PC-9 (cell line): ENCODE measurements at regions of chr6 and their contacts with region 1.

Region 1: DNA sequence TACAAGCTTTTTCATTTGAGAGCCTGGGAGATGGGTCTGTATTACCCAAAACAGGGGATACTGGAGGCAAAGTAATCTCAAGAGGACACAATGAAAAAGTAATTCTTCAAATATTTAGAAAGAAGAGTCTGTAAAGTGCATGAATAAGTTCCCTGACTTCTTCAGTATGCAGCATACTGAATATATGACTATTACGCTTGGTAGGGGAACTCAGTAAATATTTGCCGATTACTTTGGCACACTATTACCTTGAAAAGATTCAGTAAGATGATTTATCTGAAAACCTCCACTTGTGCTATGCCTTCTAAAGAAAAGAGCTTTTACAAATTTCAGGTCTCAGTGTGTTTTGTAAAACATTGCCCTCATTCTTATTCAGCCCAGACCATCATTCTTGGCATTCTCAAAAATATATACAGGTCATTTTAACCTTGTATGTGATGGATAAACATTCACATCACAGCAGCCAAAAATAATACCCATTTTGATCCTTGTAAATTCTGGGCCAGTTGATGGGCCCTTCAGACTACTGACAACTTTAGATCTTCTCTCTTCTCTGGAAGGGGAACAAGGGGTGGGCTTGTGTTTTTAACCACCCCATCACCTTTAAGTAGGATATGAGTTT is 125.9 kb downstream of the EDN1 start:
- DNase-seq: no peak
- H3K4me3 ChIP-seq: no peak overlapping the region
- H3K27ac ChIP-seq: no peak overlapping the region
- H3K4me1 ChIP-seq: no peaks in the 10 kb centered on the region
- H3K27me3 ChIP-seq: no peaks in the 10 kb centered on the region
- CTCF ChIP-seq: no peak

Region 2: GRCh38 chr6:12324514-12325147 is 91.5 kb before region 1 on chr6:
- CTCF ChIA-PET with region 1: no interaction called
- POLR2A ChIA-PET with region 1: interaction called, 14 read pairs
- intact Hi-C with region 1: no loop called
- DNase-seq: peak; percentile 31 to 56
- H3K4me3 ChIP-seq: peak overlapping the region; percentile 6; the same call in 1 of the 2 replicates
- H3K27ac ChIP-seq: peak overlapping the region; percentile 95
- H3K4me1 ChIP-seq: peaks cover 41% of the 10 kb centered on the region
- H3K27me3 ChIP-seq: no peaks in the 10 kb centered on the region
- CTCF ChIP-seq: no peak

Region 3: GRCh38 chr6:12516070-12516469 is 100.0 kb after region 1 on chr6:
- CTCF ChIA-PET with region 1: no interaction called
- POLR2A ChIA-PET with region 1: no interaction called
- intact Hi-C with region 1: no loop called
- DNase-seq: peak in 1 of 2 experiments; percentile 6
- H3K4me3 ChIP-seq: no peak overlapping the region
- H3K27ac ChIP-seq: no peak overlapping the region
- H3K4me1 ChIP-seq: no peaks in the 10 kb centered on the region
- H3K27me3 ChIP-seq: no peaks in the 10 kb centered on the region
- CTCF ChIP-seq: no peak